ENCODE measurements at regions of chr16 and their contacts with region 1.

Region 1: DNA sequence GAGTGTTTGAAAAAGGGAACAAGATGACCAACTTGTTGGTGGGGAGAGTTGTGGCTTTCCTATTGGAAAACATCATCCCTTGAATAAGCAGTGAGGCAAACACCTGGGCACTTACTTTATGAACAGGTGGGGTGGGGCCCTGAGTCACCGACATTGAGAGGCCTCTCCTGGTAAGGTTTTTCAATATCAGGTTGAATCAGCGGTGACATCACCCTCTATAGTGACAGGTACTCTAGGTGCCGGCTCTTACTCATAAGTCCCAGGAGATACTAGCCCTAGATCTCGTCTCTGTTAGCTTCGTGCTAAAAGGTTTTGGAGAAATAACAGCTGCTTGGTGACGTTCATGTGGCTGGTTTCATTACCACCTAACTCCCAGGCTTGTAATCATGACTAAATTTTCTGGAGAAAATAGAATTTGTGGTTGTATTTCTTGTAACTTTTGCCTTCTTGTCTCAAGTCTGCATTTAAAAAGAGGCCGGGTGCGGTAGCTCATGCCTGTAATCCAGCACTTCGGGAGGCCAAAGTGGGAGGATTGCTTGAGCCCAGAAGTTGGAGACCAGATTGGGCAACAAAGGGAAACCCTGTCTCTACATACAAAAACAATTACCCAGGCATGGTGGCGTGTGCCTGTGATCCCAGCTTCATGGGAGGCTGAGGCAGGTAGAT is 19.3 kb downstream of the CDH1 start:
- DNase-seq: peak; percentile 40
- ATAC-seq: peak; percentile 79
- H3K4me3 Mint-ChIP-seq: peak overlapping the region; percentile 71
- H3K27ac Mint-ChIP-seq: peak overlapping the region; percentile 98
- H3K4me1 Mint-ChIP-seq: peaks cover 51% of the 10 kb centered on the region
- H3K27me3 Mint-ChIP-seq: no peaks in the 10 kb centered on the region
- CTCF ChIP-seq: no peak

Region 2: GRCh38 chr16:68704232-68704867 is 52.0 kb before region 1 on chr16:
- CTCF ChIA-PET with region 1: interaction called, 3 read pairs
- POLR2A ChIA-PET with region 1: interaction called, 5 read pairs
- intact Hi-C with region 1: loop called (anchors 1 kb)
- DNase-seq: peak; percentile 48
- ATAC-seq: peak; percentile 58
- H3K4me3 Mint-ChIP-seq: peak overlapping the region; percentile 36
- H3K27ac Mint-ChIP-seq: no peak overlapping the region
- H3K4me1 Mint-ChIP-seq: peaks cover 5% of the 10 kb centered on the region
- H3K27me3 Mint-ChIP-seq: no peaks in the 10 kb centered on the region
- CTCF ChIP-seq: no peak

Region 3: GRCh38 chr16:68711421-68712139 is 44.8 kb before region 1 on chr16:
- CTCF ChIA-PET with region 1: interaction called, 3 read pairs
- POLR2A ChIA-PET with region 1: interaction called, 11 read pairs
- intact Hi-C with region 1: no loop called
- DNase-seq: no peak
- ATAC-seq: peak; percentile 78
- H3K4me3 Mint-ChIP-seq: peak overlapping the region; percentile 38
- H3K27ac Mint-ChIP-seq: peak overlapping the region; percentile 30
- H3K4me1 Mint-ChIP-seq: peaks cover 17% of the 10 kb centered on the region
- H3K27me3 Mint-ChIP-seq: peaks cover 12% of the 10 kb centered on the region
- CTCF ChIP-seq: no peak

Region 4: DNA sequence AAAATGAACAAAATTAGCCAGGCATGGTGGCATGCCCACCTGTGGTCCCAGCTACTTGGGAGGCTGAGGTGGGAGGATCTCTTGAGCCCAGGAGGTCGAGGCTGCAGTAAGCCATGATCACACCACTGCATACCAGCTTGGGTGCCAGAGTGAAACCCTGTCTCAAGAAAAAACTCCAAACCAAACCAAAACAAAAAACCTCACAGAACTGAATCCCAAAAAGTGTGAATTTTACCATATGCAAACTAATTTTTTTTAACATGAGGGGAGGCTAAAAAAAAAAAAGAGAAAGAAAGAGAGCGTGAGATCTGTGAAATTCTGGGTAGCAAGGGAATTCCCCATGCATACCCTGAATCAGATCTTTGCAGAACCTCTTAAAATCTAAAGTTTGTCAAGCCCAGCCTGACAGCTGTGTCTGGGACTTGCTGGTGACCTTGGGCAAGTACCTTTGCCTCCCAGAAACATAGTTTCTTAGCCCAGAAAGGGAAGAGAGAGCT is 36.3 kb before region 1 on chr16:
- CTCF ChIA-PET with region 1: no interaction called
- POLR2A ChIA-PET with region 1: interaction called, 37 read pairs
- intact Hi-C with region 1: loop called (anchors 1 kb)
- DNase-seq: no peak
- ATAC-seq: peak; percentile 92
- H3K4me3 Mint-ChIP-seq: peak overlapping the region; percentile 41
- H3K27ac Mint-ChIP-seq: peak overlapping the region; percentile 85
- H3K4me1 Mint-ChIP-seq: peaks cover 21% of the 10 kb centered on the region
- H3K27me3 Mint-ChIP-seq: no peaks in the 10 kb centered on the region
- CTCF ChIP-seq: no peak

Region 5: GRCh38 chr16:68737046-68737729 is 19.2 kb before region 1 on chr16 and contains the start of gene CDH1:
- CTCF ChIA-PET with region 1: no interaction called
- POLR2A ChIA-PET with region 1: interaction called, 12 read pairs
- intact Hi-C with region 1: loop called (anchors 1 kb)
- DNase-seq: peak; percentile 26
- ATAC-seq: peak; percentile 29
- H3K4me3 Mint-ChIP-seq: peak within 1 kb of the TSS; percentile 59
- H3K27ac Mint-ChIP-seq: no peak within 1 kb of the TSS
- H3K4me1 Mint-ChIP-seq: peaks cover 28% of the 10 kb centered on the region
- H3K27me3 Mint-ChIP-seq: peaks cover 30% of the 10 kb centered on the region
- CTCF ChIP-seq: no peak
- total RNA-seq, gene CDH1: 8.2 and 10.7 TPM in 2 replicates

Region 6: GRCh38 chr16:68800257-68800875 is 44.0 kb after region 1 on chr16:
- CTCF ChIA-PET with region 1: interaction called, 8 read pairs
- POLR2A ChIA-PET with region 1: interaction called, 7 read pairs
- intact Hi-C with region 1: loop called (anchors 1 kb)
- DNase-seq: peak; percentile 23
- ATAC-seq: peak; percentile 98
- H3K4me3 Mint-ChIP-seq: no peak overlapping the region
- H3K27ac Mint-ChIP-seq: peak overlapping the region; percentile 24
- H3K4me1 Mint-ChIP-seq: peaks cover 4% of the 10 kb centered on the region
- H3K27me3 Mint-ChIP-seq: peaks cover under 1% of the 10 kb centered on the region
- CTCF ChIP-seq: no peak